Activated CD8-positive, alpha-beta T cell treated with anti-CD3 and anti-CD28 coated beads for 36 hours (primary cell): ENCODE measurements at regions of chr1 and their contacts with region 1.

Region 1: DNA sequence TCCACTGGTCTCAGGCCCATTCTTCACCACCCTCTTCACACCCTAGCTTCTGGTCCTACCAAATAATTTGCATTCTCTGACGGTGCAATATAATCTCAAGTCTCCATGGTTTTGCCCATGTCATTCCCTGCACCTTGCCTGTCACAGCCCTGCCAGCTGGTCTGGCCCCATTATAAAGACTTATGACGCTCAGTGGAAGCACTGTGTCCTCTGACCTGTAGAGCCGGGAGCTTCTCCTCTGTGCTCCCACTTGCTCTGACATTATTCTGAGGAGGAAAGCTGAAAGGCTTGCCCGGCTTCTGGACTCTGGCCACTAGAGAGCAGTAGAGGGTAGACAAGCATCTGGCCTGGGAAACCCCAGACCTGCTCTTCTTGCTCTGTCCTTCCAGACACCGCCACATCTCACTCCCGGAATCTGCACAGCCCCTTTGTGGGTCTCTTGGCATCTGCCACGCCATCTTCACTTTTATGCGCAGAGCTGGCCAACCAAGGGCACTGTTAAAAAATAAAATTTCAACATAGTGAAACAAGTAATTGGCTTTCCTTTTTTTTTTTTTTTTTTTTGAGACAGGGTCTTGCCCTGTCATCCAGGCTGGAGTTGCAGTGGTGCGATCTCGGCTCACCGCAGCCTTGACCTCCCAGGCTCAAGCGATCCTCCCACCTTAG is 44.4 kb downstream of the NENF start:
- DNase-seq: peak; percentile 87
- ATAC-seq: peak; percentile 93
- H3K4me3 Mint-ChIP-seq: no peak overlapping the region
- H3K27ac Mint-ChIP-seq: no peak overlapping the region
- H3K4me1 Mint-ChIP-seq: peaks cover 22% of the 10 kb centered on the region
- H3K27me3 Mint-ChIP-seq: peaks cover 7% of the 10 kb centered on the region
- CTCF ChIP-seq: peak; percentile 84

Region 2: DNA sequence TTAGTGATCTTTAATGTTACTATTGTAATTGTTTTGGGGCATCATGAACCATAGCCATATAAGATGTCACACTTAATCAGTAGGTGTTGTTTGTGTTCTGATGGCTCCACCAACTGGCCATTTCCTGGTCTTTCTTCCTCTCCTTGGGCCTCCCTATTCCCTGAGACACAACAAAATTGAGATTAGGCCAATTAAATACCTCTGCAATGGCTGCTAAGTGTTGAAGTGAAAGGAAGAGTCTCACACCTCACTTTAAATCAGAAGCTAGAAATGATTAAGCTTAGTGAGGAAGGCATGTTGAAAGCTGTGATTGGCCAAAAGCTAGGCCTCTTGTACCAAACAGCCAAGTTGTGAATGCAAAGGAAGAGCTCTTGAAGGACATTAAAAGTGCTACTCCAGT is 161.2 kb before region 1 on chr1:
- CTCF ChIA-PET with region 1: no interaction called
- POLR2A ChIA-PET with region 1: no interaction called
- intact Hi-C with region 1: no loop called
- DNase-seq: peak; percentile 28
- ATAC-seq: peak; percentile 83
- H3K4me3 Mint-ChIP-seq: no peak overlapping the region
- H3K27ac Mint-ChIP-seq: peak overlapping the region; percentile 60
- H3K4me1 Mint-ChIP-seq: peaks cover 26% of the 10 kb centered on the region
- H3K27me3 Mint-ChIP-seq: no peaks in the 10 kb centered on the region
- CTCF ChIP-seq: peak; percentile 6

Region 3: GRCh38 chr1:212341090-212341489 is 136.1 kb before region 1 on chr1:
- CTCF ChIA-PET with region 1: no interaction called
- POLR2A ChIA-PET with region 1: no interaction called
- intact Hi-C with region 1: no loop called
- DNase-seq: no peak
- ATAC-seq: no peak
- H3K4me3 Mint-ChIP-seq: no peak overlapping the region
- H3K27ac Mint-ChIP-seq: no peak overlapping the region
- H3K4me1 Mint-ChIP-seq: peaks cover 4% of the 10 kb centered on the region
- H3K27me3 Mint-ChIP-seq: no peaks in the 10 kb centered on the region
- CTCF ChIP-seq: no peak

Region 4: DNA sequence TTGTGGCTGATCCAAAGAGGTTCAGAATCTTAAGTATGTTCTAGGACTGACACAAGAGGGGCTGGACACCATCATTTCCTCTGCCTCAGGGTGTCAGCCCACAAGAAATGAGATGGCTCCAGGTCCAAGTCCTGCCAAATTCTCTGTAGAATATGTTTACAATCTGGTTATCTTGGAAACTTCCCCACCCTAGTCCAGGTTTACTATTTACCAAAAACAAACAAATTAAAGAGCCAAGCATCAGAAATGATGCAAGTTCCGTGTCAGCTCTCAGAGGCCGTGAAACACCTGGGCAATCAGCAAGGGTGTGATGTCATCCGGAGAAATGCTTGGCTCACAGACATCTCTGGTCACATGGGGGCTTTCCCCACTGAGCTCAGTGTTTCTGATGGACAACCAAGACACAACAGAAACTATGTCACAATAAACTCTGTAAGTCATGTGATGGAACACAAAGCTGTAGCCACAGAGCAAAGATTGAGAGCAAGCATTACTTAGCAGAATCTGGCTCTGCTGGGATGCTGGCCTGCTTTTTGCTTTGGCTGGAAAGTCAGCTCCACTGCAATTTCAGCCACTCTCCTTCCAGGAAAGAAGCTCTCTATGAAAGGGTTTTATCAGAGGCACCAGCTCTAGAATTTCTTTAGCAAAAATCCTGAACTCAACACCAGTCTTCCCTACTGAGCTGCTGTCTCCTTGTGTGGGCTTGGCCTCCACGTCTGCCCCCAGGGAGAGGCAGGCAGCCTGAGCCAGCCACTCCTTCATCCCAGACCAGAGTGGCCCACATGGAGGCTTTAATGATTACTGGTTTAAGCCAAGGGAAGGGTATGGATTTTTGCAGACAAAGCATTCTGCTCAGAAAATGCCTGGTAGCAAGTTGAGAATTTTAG is 11.5 kb after region 1 on chr1:
- CTCF ChIA-PET with region 1: interaction called, 17 read pairs
- POLR2A ChIA-PET with region 1: no interaction called
- intact Hi-C with region 1: no loop called
- DNase-seq: peak; percentile 67
- ATAC-seq: peak; percentile 84
- H3K4me3 Mint-ChIP-seq: no peak overlapping the region
- H3K27ac Mint-ChIP-seq: peak overlapping the region; percentile 2
- H3K4me1 Mint-ChIP-seq: no peaks in the 10 kb centered on the region
- H3K27me3 Mint-ChIP-seq: no peaks in the 10 kb centered on the region
- CTCF ChIP-seq: no peak

Region 5: DNA sequence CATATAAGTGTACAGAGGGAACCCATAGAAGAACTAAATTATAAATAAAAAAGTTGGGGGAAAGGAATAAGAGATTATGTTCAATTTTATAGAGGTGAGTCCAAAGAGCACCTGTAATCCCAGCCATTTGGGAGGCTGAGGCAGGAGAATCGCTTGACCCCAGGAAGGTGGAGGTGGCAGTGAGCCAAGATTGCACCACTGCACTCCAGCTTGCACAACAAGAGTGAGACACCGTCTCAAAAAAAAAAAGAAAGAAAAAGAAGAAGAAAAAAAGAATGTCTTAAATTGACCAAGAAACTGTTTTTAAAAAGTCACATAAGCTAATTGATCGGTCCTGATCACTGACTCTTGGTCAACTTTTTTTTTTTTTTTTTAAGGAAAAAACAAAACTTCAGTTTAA is 112.3 kb after region 1 on chr1:
- CTCF ChIA-PET with region 1: interaction called, 11 read pairs
- POLR2A ChIA-PET with region 1: no interaction called
- intact Hi-C with region 1: no loop called
- DNase-seq: no peak
- ATAC-seq: no peak
- H3K4me3 Mint-ChIP-seq: no peak overlapping the region
- H3K27ac Mint-ChIP-seq: no peak overlapping the region
- H3K4me1 Mint-ChIP-seq: no peaks in the 10 kb centered on the region
- H3K27me3 Mint-ChIP-seq: peaks cover 22% of the 10 kb centered on the region
- CTCF ChIP-seq: no peak

Region 6: GRCh38 chr1:212630158-212630900 is 153.2 kb after region 1 on chr1:
- CTCF ChIA-PET with region 1: interaction called, 11 read pairs
- POLR2A ChIA-PET with region 1: no interaction called
- intact Hi-C with region 1: loop called (anchors 5 kb)
- DNase-seq: peak; percentile 75
- ATAC-seq: peak; percentile 100
- H3K4me3 Mint-ChIP-seq: no peak overlapping the region
- H3K27ac Mint-ChIP-seq: no peak overlapping the region
- H3K4me1 Mint-ChIP-seq: peaks cover 7% of the 10 kb centered on the region
- H3K27me3 Mint-ChIP-seq: peaks cover 6% of the 10 kb centered on the region
- CTCF ChIP-seq: peak; percentile 94

Region 7: DNA sequence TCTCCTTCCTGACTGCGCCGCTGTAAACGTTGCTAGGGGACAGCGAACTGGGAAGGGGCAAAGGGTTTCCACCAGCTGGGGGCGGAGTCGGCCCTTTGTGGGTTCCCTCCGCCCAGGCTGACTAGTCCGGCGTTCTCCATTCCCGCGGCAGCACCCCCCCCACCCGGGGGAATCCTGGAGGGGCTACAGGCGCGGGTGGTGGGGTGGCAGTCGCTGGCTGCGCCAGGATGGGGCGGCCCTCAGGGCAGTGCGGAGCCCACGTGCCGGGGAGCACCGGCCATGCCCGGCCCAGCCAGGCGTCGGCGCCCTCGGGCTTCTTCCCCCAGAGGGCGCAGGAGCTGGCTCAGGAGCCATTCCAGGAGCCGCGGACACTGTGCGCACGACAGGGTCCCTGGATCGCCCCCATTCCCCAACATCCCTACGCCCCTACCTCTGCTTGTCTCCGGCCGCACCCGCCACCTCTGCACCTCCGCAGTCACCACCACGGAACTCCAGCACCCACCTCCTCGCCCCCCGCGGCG is 222.0 kb after region 1 on chr1:
- CTCF ChIA-PET with region 1: interaction called, 16 read pairs
- POLR2A ChIA-PET with region 1: no interaction called
- intact Hi-C with region 1: no loop called
- DNase-seq: peak; percentile 75
- ATAC-seq: peak; percentile 75
- H3K4me3 Mint-ChIP-seq: peak overlapping the region; percentile 79
- H3K27ac Mint-ChIP-seq: peak overlapping the region; percentile 92
- H3K4me1 Mint-ChIP-seq: peaks cover 57% of the 10 kb centered on the region
- H3K27me3 Mint-ChIP-seq: peaks cover 1% of the 10 kb centered on the region
- CTCF ChIP-seq: peak; percentile 79

Region 8: GRCh38 chr1:212731630-212732029 is 254.5 kb after region 1 on chr1:
- CTCF ChIA-PET with region 1: no interaction called
- POLR2A ChIA-PET with region 1: no interaction called
- intact Hi-C with region 1: no loop called
- DNase-seq: no peak
- ATAC-seq: no peak
- H3K4me3 Mint-ChIP-seq: no peak overlapping the region
- H3K27ac Mint-ChIP-seq: no peak overlapping the region
- H3K4me1 Mint-ChIP-seq: peaks cover 22% of the 10 kb centered on the region
- H3K27me3 Mint-ChIP-seq: no peaks in the 10 kb centered on the region
- CTCF ChIP-seq: no peak

Region 9: GRCh38 chr1:212782422-212783154 is 305.4 kb after region 1 on chr1:
- CTCF ChIA-PET with region 1: interaction called, 19 read pairs
- POLR2A ChIA-PET with region 1: no interaction called
- intact Hi-C with region 1: no loop called
- DNase-seq: no peak
- ATAC-seq: peak; percentile 68
- H3K4me3 Mint-ChIP-seq: no peak overlapping the region
- H3K27ac Mint-ChIP-seq: no peak overlapping the region
- H3K4me1 Mint-ChIP-seq: peaks cover 23% of the 10 kb centered on the region
- H3K27me3 Mint-ChIP-seq: no peaks in the 10 kb centered on the region
- CTCF ChIP-seq: peak; percentile 86